ENCODE measurements at regions of chr11 and their contacts with region 1.

Region 1: DNA sequence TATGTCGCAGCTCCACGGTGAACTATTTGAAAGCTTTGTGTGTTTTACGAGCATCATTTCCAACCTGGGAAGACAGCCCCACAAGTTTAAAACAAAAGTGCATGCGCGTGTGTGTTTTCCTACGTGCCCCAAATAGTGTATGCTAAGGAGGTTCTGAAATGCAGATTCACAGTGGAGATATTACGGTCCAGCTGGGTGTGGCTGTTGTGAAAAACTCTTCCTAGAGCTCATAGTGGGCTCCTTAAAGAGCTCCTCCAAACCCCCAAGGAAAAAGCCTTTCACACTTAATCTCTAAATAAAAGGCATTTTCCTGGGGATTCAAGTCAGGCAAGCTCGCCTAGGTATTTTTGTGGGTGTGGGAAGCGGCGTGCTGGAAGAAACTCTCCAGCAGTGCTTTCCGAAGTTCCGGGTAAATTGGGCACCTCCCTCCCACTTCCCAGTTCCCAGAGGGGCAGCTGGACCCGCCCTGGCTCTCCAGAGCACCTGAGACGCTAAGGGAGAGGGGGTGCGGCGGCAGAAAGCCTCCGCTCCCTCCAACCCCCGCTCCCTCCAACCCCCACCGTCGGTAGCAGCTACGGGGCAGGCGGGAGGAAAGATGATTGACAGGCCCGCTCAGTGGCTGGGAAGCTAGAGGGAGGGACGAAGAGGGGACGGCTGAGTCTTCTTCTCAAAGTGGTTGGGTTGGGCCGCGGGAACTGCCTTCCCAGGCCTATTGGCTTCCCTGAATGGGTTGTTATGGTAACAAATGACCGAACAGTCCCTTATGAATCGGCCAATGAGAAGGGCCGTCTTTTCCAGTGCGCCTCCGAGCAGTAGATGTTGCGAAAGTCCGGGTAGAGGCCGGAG is 558 bp upstream of the PCF11 start:
- DNase-seq: peak; percentile 99

Region 2: GRCh38 chr11:82989628-82990404 is 166.6 kb before region 1 on chr11:
- intact Hi-C with region 1: loop called (anchors 5 kb)
- DNase-seq: no peak

Region 3: DNA sequence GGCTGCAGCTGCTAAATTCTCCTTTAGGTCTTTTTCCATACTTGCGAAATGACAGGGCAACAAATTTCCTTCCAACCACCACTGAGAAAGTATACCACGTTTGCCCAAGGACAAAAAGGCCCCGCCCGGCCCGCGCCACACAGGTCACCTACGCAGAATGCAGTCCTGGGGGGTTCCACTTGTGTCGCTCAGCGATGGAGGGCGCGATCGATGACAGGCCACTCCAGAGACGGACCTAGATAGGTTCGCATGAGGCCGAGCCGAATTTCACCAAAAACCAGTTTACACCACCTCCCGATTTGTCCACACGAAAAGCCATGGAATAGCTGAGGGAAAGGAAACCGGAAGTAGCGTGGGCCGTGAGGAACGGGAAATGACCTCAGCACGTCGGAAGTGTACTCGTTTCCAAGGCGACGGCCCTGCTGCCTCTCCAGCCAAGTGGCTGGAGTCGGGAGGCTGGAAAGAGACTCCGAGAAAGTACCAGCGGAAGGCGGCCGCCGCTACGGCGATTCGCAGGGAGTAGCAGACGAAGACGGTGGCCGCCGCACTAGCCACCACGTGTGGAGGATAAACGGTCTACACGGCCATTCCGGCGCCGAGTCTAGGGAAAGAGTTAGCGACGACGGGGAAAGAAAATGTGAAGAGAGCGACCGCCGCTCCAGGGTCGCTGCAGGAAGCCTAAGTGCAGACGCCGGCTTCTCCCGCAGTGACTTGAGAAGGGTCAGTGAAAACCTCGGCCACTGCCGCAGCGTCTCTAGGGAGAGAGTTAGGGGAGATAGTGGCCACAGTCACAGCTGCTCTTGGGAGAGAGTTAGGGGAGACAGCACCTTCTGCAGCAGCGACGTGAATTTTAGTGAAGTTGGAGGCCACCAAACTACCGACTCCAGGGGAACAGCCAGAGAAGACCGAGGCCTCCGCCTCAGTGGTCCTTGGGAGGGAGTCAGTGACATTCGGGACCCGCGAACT is 37.2 kb after region 1 on chr11 and contains the start of gene ANKRD42:
- intact Hi-C with region 1: loop called (anchors 2 kb)
- DNase-seq: peak; percentile 96
- total RNA-seq, gene ANKRD42: 6.0 TPM

Region 4: GRCh38 chr11:83285771-83286528 is 129.6 kb after region 1 on chr11 and contains the start of gene CCDC90B:
- intact Hi-C with region 1: loop called (anchors 1 kb)
- DNase-seq: peak; percentile 98
- total RNA-seq, gene CCDC90B: 29.5 TPM

Region 5: DNA sequence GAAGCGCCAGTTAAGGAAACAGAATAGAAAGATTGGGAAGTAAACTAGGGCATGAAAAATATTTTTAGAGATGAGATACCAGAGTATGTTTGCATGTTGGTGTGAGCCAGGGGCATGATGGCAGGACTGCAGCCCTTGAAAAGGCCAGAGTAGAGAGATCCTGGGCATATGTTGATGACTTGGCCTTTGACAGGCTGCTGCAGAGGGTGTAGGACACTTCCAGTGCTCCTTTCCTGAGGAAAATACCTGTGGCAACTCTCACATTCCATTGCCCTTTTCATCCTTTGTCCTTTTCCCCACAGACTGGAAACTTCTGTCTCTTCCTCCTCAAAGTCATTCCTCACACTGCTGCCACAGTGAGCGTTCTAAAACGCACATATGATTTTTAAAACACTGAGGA is 280.5 kb after region 1 on chr11:
- intact Hi-C with region 1: no loop called
- DNase-seq: no peak